ENCODE measurements at regions of chr4 and their contacts with region 1.

Region 1: DNA sequence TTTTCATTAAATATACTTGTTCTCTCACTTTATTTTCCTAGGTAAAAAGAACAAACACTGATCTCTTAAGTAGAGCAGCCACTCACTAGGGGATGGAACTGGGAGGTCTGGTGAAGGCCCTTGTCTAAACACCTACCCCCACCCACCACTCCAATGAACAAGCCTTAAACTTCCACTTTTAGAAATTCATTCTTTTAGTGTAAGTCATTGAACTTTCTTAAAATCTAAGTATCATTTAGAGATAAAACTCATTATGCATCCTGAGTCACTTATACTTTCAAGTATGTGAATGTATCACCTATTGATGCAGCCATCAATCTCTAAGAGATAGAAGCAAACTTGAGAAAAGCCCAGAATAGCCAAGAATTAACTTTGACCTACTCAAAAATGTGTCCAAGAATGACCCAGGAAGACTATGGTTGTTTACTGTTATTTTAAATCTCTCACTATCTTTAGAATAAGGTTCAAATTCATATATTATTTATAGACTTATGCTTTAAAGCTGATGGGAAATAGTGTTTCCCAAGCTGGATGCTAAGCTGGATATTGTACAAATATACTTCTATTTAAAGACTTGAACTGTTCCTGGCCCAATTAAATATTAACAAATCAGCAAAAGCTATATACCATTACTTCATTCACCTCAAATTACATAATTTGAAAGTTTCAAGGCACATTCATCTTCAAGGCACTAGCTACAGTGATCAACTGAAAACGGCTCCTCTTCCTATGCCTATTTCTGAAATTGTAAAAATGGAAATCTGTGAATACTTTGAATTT is 49.5 kb downstream of the CAMK2D start:
- DNase-seq: no peak
- ATAC-seq: no peak
- H3K4me3 ChIP-seq: no peak overlapping the region
- H3K4me3 Mint-ChIP-seq: no peak overlapping the region
- H3K27ac ChIP-seq: no peak overlapping the region
- H3K27ac Mint-ChIP-seq: no peak overlapping the region
- H3K4me1 ChIP-seq: peaks cover 0 to 13% of the 10 kb centered on the region in 2 donors
- H3K4me1 Mint-ChIP-seq: peaks cover 48% of the 10 kb centered on the region
- H3K27me3 ChIP-seq: no peaks in the 10 kb centered on the region
- H3K27me3 Mint-ChIP-seq: no peaks in the 10 kb centered on the region
- CTCF ChIP-seq: no peak

Region 2: GRCh38 chr4:112978691-112979472 is 733.2 kb before region 1 on chr4:
- CTCF ChIA-PET with region 1: no interaction called
- POLR2A ChIA-PET with region 1: no interaction called
- intact Hi-C with region 1: no loop called
- DNase-seq: no peak
- ATAC-seq: no peak
- H3K4me3 ChIP-seq: no peak overlapping the region
- H3K4me3 Mint-ChIP-seq: no peak overlapping the region
- H3K27ac ChIP-seq: no peak overlapping the region
- H3K27ac Mint-ChIP-seq: no peak overlapping the region
- H3K4me1 ChIP-seq: no peaks in the 10 kb centered on the region
- H3K4me1 Mint-ChIP-seq: no peaks in the 10 kb centered on the region
- H3K27me3 ChIP-seq: no peaks in the 10 kb centered on the region
- H3K27me3 Mint-ChIP-seq: no peaks in the 10 kb centered on the region
- CTCF ChIP-seq: no peak

Region 3: DNA sequence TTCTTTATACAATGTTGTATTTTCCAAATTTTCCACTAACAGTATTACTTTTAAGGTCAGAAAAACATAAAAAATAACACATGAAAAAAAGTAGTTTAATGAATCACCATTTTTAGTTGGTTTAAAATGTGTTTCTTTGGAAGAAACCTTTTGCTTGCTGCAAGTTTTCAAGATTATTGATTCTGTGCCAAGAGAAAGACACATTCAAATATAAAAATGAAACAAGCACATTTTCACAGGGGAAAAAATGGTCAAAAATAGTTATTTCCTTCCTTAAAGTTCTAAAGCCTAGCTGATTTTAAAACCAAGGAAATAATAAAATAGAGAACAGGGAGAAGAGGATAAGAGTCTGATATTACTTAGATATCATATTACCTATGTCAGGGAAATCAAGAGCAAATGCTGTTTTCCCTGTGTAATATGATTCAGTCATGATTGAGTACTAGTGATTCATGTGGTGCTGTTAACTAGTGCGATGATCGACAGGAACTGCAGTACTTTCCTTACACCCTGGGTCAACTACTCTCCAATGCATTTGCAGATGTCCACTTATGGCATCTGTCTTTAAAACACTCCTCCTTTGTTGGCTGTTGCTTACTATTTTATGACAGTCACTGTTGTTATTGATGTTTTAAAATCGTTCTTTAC is 54.4 kb before region 1 on chr4:
- CTCF ChIA-PET with region 1: no interaction called
- POLR2A ChIA-PET with region 1: no interaction called
- intact Hi-C with region 1: no loop called
- DNase-seq: no peak
- ATAC-seq: no peak
- H3K4me3 ChIP-seq: no peak overlapping the region
- H3K4me3 Mint-ChIP-seq: no peak overlapping the region
- H3K27ac ChIP-seq: no peak overlapping the region
- H3K27ac Mint-ChIP-seq: no peak overlapping the region
- H3K4me1 ChIP-seq: peaks cover 7 to 22% of the 10 kb centered on the region in 2 donors
- H3K4me1 Mint-ChIP-seq: peaks cover 50% of the 10 kb centered on the region
- H3K27me3 ChIP-seq: no peaks in the 10 kb centered on the region
- H3K27me3 Mint-ChIP-seq: no peaks in the 10 kb centered on the region
- CTCF ChIP-seq: no peak

Region 4: GRCh38 chr4:113692809-113693411 is 19.2 kb before region 1 on chr4:
- CTCF ChIA-PET with region 1: interaction called, 4 read pairs
- POLR2A ChIA-PET with region 1: no interaction called
- intact Hi-C with region 1: loop called (anchors 2 kb)
- DNase-seq: peak; percentile 63
- ATAC-seq: peak; percentile 84
- H3K4me3 ChIP-seq: peak overlapping the region in 1 of 5 experiments; percentile 44
- H3K4me3 Mint-ChIP-seq: peak overlapping the region; percentile 65
- H3K27ac ChIP-seq: peak overlapping the region; percentile 42 to 80
- H3K27ac Mint-ChIP-seq: peak overlapping the region; percentile 86
- H3K4me1 ChIP-seq: peaks cover 24 to 54% of the 10 kb centered on the region in 2 donors
- H3K4me1 Mint-ChIP-seq: peaks cover 50% of the 10 kb centered on the region
- H3K27me3 ChIP-seq: no peaks in the 10 kb centered on the region
- H3K27me3 Mint-ChIP-seq: no peaks in the 10 kb centered on the region
- CTCF ChIP-seq: no peak

Region 5: GRCh38 chr4:113744667-113745240 is 32.7 kb after region 1 on chr4:
- CTCF ChIA-PET with region 1: interaction called, 3 read pairs
- POLR2A ChIA-PET with region 1: no interaction called
- intact Hi-C with region 1: loop called (anchors 5 kb)
- DNase-seq: no peak
- ATAC-seq: no peak
- H3K4me3 ChIP-seq: no peak overlapping the region
- H3K4me3 Mint-ChIP-seq: no peak overlapping the region
- H3K27ac ChIP-seq: peak overlapping the region in 1 of 2 donors; percentile 54
- H3K27ac Mint-ChIP-seq: no peak overlapping the region
- H3K4me1 ChIP-seq: peaks cover 0 to 11% of the 10 kb centered on the region in 2 donors
- H3K4me1 Mint-ChIP-seq: peaks cover 24% of the 10 kb centered on the region
- H3K27me3 ChIP-seq: no peaks in the 10 kb centered on the region
- H3K27me3 Mint-ChIP-seq: no peaks in the 10 kb centered on the region
- CTCF ChIP-seq: no peak

Region 6: GRCh38 chr4:113869743-113870375 is 157.8 kb after region 1 on chr4:
- CTCF ChIA-PET with region 1: no interaction called
- POLR2A ChIA-PET with region 1: no interaction called
- intact Hi-C with region 1: no loop called
- DNase-seq: peak; percentile 45
- ATAC-seq: peak; percentile 97
- H3K4me3 ChIP-seq: no peak overlapping the region
- H3K4me3 Mint-ChIP-seq: peak overlapping the region; percentile 27
- H3K27ac ChIP-seq: no peak overlapping the region
- H3K27ac Mint-ChIP-seq: peak overlapping the region; percentile 85
- H3K4me1 ChIP-seq: peaks cover 4 to 5% of the 10 kb centered on the region in 2 donors
- H3K4me1 Mint-ChIP-seq: peaks cover 11% of the 10 kb centered on the region
- H3K27me3 ChIP-seq: no peaks in the 10 kb centered on the region
- H3K27me3 Mint-ChIP-seq: no peaks in the 10 kb centered on the region
- CTCF ChIP-seq: no peak